ENCODE measurements at regions of chr7 and their contacts with region 1.

Region 1: GRCh38 chr7:17523813-17524741 is 225.6 kb downstream of the AHR start:
- DNase-seq: peak; percentile 44
- ATAC-seq: peak; percentile 97
- H3K4me3 ChIP-seq: no peak overlapping the region
- H3K27ac ChIP-seq: peak overlapping the region; percentile 22
- H3K4me1 ChIP-seq: peaks cover 22% of the 10 kb centered on the region
- H3K27me3 ChIP-seq: no peaks in the 10 kb centered on the region
- CTCF ChIP-seq: no peak
- EP300 ChIP-seq: peak; percentile 20 to 57; a peak in 3 of 4 replicates
- POLR2A ChIP-seq: no peak
- RAD21 ChIP-seq: no peak

Region 2: DNA sequence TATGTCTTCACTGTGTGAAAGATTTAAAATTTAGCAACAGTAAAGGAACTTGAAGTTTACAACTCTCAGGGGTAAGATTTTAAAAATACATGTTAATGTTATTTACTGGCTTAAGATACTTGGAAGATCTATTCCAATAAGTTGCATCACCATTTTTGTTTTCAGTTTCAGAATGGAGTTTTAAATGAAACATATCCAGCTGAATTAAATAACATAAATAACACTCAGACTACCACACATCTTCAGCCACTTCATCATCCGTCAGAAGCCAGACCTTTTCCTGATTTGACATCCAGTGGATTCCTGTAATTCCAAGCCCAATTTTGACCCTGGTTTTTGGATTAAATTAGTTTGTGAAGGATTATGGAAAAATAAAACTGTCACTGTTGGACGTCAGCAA is 181.3 kb before region 1 on chr7:
- CTCF ChIA-PET with region 1: no interaction called
- POLR2A ChIA-PET with region 1: no interaction called
- in situ Hi-C with region 1: no loop called
- intact Hi-C with region 1: loop called (anchors 10 kb)
- DNase-seq: no peak
- ATAC-seq: no peak
- H3K4me3 ChIP-seq: no peak overlapping the region
- H3K27ac ChIP-seq: no peak overlapping the region
- H3K4me1 ChIP-seq: no peaks in the 10 kb centered on the region
- H3K27me3 ChIP-seq: no peaks in the 10 kb centered on the region
- CTCF ChIP-seq: no peak
- EP300 ChIP-seq: no peak
- POLR2A ChIP-seq: no peak
- RAD21 ChIP-seq: no peak